Panc1 (cell line): ENCODE measurements at regions of chr5 and their contacts with region 1.

Region 1: DNA sequence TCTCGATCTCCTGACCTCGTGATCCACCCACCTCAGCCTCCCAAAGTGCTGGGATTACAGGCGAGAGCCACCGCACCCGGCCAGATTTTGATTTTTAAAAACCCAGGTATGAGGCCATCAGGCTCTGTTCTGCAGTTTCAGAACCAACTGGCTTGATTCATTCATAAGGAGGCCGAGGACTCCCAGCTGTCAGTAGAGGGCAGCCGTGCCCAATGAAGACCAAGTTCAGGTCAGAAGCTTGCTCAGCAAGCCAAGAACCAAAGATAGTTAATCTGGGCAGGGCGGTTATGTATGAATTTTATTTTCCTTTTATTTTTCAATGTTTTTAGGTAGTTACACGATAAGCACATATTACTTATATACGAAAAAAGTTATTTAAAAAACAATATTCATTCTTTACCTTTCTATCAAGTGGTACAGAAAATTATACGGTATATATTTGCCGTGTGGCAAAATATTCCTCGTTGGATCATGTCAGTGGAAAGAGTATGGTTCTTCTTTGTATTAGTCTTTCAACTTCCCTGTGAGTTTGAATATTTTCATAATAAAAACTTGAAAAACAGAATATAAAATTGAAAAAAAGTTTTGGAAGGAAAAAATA is 18.0 kb downstream of the MGAT1 start:
- DNase-seq: peak; percentile 45
- ATAC-seq: peak; percentile 84
- H3K4me3 ChIP-seq: no peak overlapping the region
- H3K27ac ChIP-seq: no peak overlapping the region
- H3K4me1 ChIP-seq: peaks cover 18% of the 10 kb centered on the region
- H3K27me3 ChIP-seq: no peaks in the 10 kb centered on the region
- CTCF ChIP-seq: peak; percentile 94

Region 2: DNA sequence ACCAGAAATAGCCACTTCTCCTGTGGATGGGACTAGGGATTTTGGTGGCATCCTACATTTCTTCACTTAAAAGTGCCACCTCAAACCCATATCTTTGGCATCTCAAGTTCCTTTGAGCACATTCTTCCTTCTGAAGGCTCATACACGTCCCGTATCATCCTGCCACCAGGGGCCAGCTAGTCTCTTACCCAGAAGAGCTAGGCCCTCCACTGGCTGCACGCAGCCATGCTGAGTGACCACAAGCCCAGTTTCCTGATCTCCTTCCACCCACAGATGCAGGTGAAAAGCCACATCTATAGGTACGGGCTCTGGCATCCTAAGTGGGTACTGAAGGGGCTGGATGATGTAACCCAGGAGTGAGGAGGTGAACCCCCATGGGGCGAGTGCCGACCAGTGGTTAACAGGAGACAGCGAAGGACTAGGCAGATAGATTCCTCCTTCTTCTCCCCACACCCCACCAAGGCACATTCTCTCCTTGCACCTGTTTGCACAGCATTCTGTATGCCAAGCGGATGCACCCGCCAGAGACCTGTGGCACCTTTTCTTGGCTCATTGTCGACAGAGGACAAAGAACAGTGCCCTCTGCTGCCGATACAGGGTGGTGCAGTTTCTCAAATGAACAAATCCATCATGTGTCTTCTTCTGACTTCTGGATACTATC is 178.9 kb before region 1 on chr5:
- CTCF ChIA-PET with region 1: no interaction called
- POLR2A ChIA-PET with region 1: no interaction called
- in situ Hi-C with region 1: no loop called
- intact Hi-C with region 1: no loop called
- DNase-seq: peak; percentile 46
- ATAC-seq: peak; percentile 61; the same call in 1 of the 2 replicates
- H3K4me3 ChIP-seq: no peak overlapping the region
- H3K27ac ChIP-seq: no peak overlapping the region
- H3K4me1 ChIP-seq: no peaks in the 10 kb centered on the region
- H3K27me3 ChIP-seq: no peaks in the 10 kb centered on the region
- CTCF ChIP-seq: peak; percentile 92

Region 3: DNA sequence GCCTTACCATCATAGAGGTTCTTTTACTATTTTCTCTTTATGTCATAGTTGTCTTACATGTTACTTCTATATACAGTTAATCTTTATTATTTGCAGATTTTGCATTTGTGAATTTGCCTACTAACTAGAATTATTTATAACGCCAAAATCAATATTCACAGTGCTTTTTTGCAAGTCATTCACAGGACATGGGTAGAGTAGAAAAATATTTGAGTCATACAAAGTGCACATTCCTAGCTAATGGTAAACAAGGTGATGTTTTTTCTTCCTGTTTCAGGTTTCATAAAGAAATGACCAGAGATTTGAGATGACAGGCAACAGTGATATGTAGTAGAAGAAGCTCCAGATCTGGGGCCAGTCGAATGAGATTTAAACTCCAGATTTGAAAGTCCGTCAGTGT is 14.8 kb before region 1 on chr5:
- CTCF ChIA-PET with region 1: no interaction called
- POLR2A ChIA-PET with region 1: no interaction called
- in situ Hi-C with region 1: no loop called
- intact Hi-C with region 1: no loop called
- DNase-seq: no peak
- ATAC-seq: no peak
- H3K4me3 ChIP-seq: no peak overlapping the region
- H3K27ac ChIP-seq: no peak overlapping the region
- H3K4me1 ChIP-seq: no peaks in the 10 kb centered on the region
- H3K27me3 ChIP-seq: no peaks in the 10 kb centered on the region
- CTCF ChIP-seq: no peak

Region 4: GRCh38 chr5:180860887-180861822 is 76.6 kb after region 1 on chr5 and contains the start of gene ZFP62:
- CTCF ChIA-PET with region 1: no interaction called
- POLR2A ChIA-PET with region 1: no interaction called
- in situ Hi-C with region 1: no loop called
- intact Hi-C with region 1: loop called (anchors 5 kb)
- DNase-seq: peak; percentile 48
- ATAC-seq: peak; percentile 98
- H3K4me3 ChIP-seq: peak within 1 kb of the TSS; percentile 74 to 80
- H3K27ac ChIP-seq: peak within 1 kb of the TSS; percentile 93
- H3K4me1 ChIP-seq: peaks cover 7% of the 10 kb centered on the region; the same call in 1 of the 2 replicates
- H3K27me3 ChIP-seq: no peaks in the 10 kb centered on the region
- CTCF ChIP-seq: peak; percentile 10
- total RNA-seq, gene ZFP62: 17.8 TPM